HepG2 (cell line): ENCODE measurements at regions of chr17 and their contacts with region 1.

Region 1: GRCh38 chr17:63773381-63774140 is at the start of gene CCDC47:
- DNase-seq: peak; percentile 100
- ATAC-seq: peak; percentile 91
- H3K4me3 ChIP-seq: peak within 1 kb of the TSS; percentile 93 to 99 (median 94)
- H3K27ac ChIP-seq: peak within 1 kb of the TSS; percentile 100
- H3K4me1 ChIP-seq: peaks cover 45% of the 10 kb centered on the region
- H3K27me3 ChIP-seq: peaks cover 0 to 6% of the 10 kb centered on the region in 2 experiments; a peak in 1 of 5 replicates
- CTCF ChIP-seq: peak; percentile 4; the same call in 1 of the 2 replicates
- EP300 ChIP-seq: peak; percentile 47 to 68
- POLR2A ChIP-seq: peak; percentile 88 to 96
- RAD21 ChIP-seq: no peak; the same call in none of the 2 replicates
- total RNA-seq, gene CCDC47: 61.6 and 99.5 TPM in 2 replicates

Region 2: DNA sequence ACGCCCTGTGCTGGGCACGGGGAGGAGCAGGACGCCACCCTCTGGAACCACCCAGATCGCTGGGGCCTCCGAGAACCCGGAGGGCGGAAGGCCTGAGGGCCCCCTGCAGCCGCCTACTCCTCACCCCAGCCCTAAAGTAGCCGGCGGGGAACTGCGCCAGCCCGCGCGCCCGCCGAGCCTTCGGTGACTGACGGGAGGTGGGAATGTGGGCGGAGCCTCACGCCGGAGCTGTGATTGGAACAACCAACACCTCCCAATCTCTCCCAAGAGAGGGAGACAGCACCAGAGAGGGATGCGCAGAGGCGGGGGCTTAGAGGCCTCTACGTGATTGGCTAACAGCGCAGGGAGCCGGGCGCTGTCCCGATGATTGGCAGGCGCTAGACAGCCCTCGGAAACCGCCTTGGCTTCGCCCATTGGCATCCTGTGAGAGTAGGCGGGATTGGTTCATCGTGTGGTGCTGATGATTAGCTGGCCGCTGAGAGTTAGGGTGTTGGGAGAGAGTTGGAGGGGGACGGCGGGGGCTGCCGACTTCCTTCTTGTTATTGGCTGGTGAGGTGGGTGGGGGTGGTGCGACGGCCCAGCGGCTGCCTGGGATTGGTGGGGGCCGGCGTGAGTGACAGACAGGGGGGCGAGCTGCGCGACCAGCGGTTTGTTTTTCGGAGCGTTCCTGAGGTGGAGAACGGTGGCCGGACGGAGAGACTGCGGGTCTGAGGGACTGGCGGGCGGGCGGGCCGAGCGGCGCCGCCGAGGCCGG is 151.6 kb before region 1 on chr17 and contains the start of gene MAP3K3:
- CTCF ChIA-PET with region 1: no interaction called
- POLR2A ChIA-PET with region 1: interaction called, 15 read pairs
- in situ Hi-C with region 1: no loop called
- intact Hi-C with region 1: no loop called
- DNase-seq: peak; percentile 100
- ATAC-seq: peak; percentile 95
- H3K4me3 ChIP-seq: peak within 1 kb of the TSS; percentile 80 to 97 (median 85)
- H3K27ac ChIP-seq: peak within 1 kb of the TSS; percentile 42
- H3K4me1 ChIP-seq: peaks cover 43% of the 10 kb centered on the region
- H3K27me3 ChIP-seq: peaks cover 0 to 4% of the 10 kb centered on the region in 2 experiments; a peak in 1 of 5 replicates
- CTCF ChIP-seq: peak; percentile 58
- EP300 ChIP-seq: no peak
- POLR2A ChIP-seq: peak; percentile 68 to 94
- RAD21 ChIP-seq: peak; percentile 37; the same call in 1 of the 2 replicates
- total RNA-seq, gene MAP3K3: 15.9 and 21.8 TPM in 2 replicates

Region 3: DNA sequence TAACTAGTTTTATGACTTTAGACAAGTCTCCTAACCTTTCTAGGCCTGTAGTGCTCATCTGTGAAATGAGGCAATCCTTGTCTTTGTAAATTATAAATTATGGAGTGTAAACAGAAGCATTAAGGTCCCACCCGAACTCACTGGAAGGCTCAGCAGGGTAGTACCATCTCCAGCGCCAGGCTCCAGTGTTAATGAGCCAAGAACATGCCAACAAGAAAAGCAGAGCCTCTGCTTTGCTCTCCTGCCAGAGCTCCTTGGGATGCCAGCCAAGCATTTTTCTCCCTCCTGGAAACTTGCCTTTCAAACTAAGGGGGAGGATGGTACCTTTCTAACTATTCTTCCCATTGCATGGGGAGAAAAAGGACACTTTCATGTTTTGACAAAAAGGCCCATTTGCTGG is 88.5 kb before region 1 on chr17:
- CTCF ChIA-PET with region 1: no interaction called
- POLR2A ChIA-PET with region 1: no interaction called
- in situ Hi-C with region 1: no loop called
- intact Hi-C with region 1: no loop called
- DNase-seq: no peak
- ATAC-seq: no peak
- H3K4me3 ChIP-seq: no peak overlapping the region
- H3K27ac ChIP-seq: no peak overlapping the region
- H3K4me1 ChIP-seq: no peaks in the 10 kb centered on the region
- H3K27me3 ChIP-seq: no peaks in the 10 kb centered on the region
- CTCF ChIP-seq: no peak
- EP300 ChIP-seq: no peak
- POLR2A ChIP-seq: no peak
- RAD21 ChIP-seq: no peak

Region 4: GRCh38 chr17:63762161-63763078 is 11.1 kb before region 1 on chr17:
- CTCF ChIA-PET with region 1: no interaction called
- POLR2A ChIA-PET with region 1: interaction called, 20 read pairs
- in situ Hi-C with region 1: no loop called
- intact Hi-C with region 1: no loop called
- DNase-seq: no peak
- ATAC-seq: no peak
- H3K4me3 ChIP-seq: no peak overlapping the region
- H3K27ac ChIP-seq: no peak overlapping the region
- H3K4me1 ChIP-seq: no peaks in the 10 kb centered on the region
- H3K27me3 ChIP-seq: no peaks in the 10 kb centered on the region
- CTCF ChIP-seq: no peak
- EP300 ChIP-seq: no peak
- POLR2A ChIP-seq: no peak
- RAD21 ChIP-seq: no peak

Region 5: GRCh38 chr17:63798572-63799106 is 25.1 kb after region 1 on chr17:
- CTCF ChIA-PET with region 1: no interaction called
- POLR2A ChIA-PET with region 1: interaction called, 10 read pairs
- in situ Hi-C with region 1: no loop called
- intact Hi-C with region 1: no loop called
- DNase-seq: no peak
- ATAC-seq: peak; percentile 51
- H3K4me3 ChIP-seq: no peak overlapping the region
- H3K27ac ChIP-seq: no peak overlapping the region
- H3K4me1 ChIP-seq: no peaks in the 10 kb centered on the region
- H3K27me3 ChIP-seq: no peaks in the 10 kb centered on the region
- CTCF ChIP-seq: no peak
- EP300 ChIP-seq: no peak
- POLR2A ChIP-seq: no peak
- RAD21 ChIP-seq: no peak

Region 6: DNA sequence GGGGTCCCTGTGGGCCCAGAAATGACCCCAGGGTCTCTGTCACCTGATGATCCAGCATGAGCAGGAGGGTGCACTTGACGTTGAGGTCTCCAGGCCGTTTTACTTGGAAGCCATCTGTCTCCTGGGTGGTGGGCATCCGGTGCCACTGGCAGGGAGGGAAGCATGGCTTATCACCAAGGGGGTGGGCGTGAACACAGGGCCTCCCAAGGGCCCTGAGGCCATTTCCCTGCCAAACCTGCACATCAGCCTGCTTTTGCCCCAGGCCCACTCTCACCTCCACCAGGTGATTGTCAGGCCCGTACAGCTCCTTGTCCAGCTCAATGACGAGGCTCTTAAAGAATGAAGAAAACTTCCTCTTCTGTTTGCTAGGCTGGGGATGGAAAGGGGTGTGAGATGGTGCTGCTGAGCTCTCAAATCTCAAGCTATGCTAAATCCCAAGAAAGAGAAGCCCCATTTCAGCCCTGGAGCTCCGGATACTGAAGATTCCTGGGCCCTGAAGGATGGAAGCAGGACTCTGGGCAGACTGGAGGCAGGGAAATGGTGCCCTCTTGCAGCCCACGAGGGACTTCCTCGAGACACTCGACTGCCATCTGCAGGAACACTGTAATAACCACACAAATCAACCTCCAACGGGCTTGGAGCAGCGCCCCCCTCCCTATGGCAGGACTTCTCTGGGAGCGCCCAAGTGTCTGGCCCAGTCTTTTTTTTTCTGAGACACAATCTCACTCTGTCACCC is 61.0 kb after region 1 on chr17:
- CTCF ChIA-PET with region 1: no interaction called
- POLR2A ChIA-PET with region 1: interaction called, 33 read pairs
- in situ Hi-C with region 1: no loop called
- intact Hi-C with region 1: loop called (anchors 5 kb)
- DNase-seq: peak; percentile 81
- ATAC-seq: peak; percentile 81
- H3K4me3 ChIP-seq: no peak overlapping the region
- H3K27ac ChIP-seq: no peak overlapping the region
- H3K4me1 ChIP-seq: peaks cover 15% of the 10 kb centered on the region
- H3K27me3 ChIP-seq: no peaks in the 10 kb centered on the region
- CTCF ChIP-seq: peak; percentile 76
- EP300 ChIP-seq: no peak
- POLR2A ChIP-seq: no peak; a peak in 1 of 4 replicates
- RAD21 ChIP-seq: peak; percentile 64